PC-9 (cell line): ENCODE measurements at regions of chr1 and their contacts with region 1.

Region 1: DNA sequence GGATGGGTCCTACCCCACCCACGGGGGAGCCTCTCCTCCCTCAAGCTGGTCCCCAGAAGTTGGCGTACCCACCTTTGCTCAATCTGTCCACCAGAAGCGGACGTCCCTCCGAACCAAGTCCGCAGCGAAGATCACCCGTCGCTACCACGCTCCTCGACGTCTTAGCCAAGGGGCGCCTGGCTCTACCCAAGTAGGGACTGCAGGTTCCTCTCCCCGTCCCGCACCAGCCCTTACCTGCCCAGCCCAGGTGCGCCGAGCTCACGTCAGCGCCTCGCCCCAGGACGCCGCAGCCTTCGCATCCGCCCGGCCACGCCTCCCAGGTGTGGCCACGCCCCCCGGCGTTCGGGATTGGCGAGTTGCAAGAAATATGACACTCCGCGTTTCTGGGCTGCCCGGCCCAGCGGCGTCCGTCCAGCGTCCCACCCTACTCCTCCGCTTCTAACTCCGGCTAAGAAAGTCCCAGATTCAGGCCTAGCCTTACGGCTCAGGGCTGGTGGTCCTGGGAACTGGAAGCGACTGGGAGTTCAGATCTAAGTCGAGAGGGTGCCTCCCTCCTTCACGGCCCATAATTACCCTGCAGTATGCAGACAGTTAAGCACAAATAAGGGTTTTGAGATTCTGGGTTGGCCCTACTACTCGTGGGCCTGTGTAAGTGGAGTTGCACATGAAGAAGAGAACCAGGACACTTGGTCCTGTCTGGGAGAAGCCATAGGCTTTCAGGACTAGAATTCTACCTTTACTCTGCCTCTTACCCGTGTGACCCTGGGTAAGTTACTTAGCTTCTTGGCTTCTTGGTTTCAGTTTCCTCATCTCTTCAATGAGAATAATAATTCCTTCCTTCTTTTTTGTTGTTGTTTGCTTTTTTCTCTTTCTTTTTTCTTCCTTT is at the start of gene IRF6:
- DNase-seq: peak; percentile 89 to 96
- H3K4me3 ChIP-seq: peak within 1 kb of the TSS; percentile 78
- H3K27ac ChIP-seq: peak within 1 kb of the TSS; percentile 80
- H3K4me1 ChIP-seq: peaks cover 41% of the 10 kb centered on the region
- H3K27me3 ChIP-seq: no peaks in the 10 kb centered on the region
- CTCF ChIP-seq: no peak
- total RNA-seq, gene IRF6: 46.5 and 50.9 TPM in 2 replicates

Region 2: GRCh38 chr1:208714323-208714722 is 1091.8 kb before region 1 on chr1:
- CTCF ChIA-PET with region 1: no interaction called
- POLR2A ChIA-PET with region 1: no interaction called
- intact Hi-C with region 1: no loop called
- DNase-seq: no peak
- H3K4me3 ChIP-seq: no peak overlapping the region
- H3K27ac ChIP-seq: no peak overlapping the region
- H3K4me1 ChIP-seq: no peaks in the 10 kb centered on the region
- H3K27me3 ChIP-seq: 0 out of 2 replicates have a peak, but pooled peaks cover 4% of the 10 kb centered on the region
- CTCF ChIP-seq: no peak

Region 3: GRCh38 chr1:209784265-209785169 is 21.6 kb before region 1 on chr1 and contains the start of gene C1orf74:
- CTCF ChIA-PET with region 1: interaction called, 14 read pairs
- POLR2A ChIA-PET with region 1: interaction called, 40 read pairs
- intact Hi-C with region 1: loop called (anchors 1 kb)
- DNase-seq: peak; percentile 94 to 98
- H3K4me3 ChIP-seq: peak within 1 kb of the TSS; percentile 92
- H3K27ac ChIP-seq: peak within 1 kb of the TSS; percentile 85
- H3K4me1 ChIP-seq: peaks cover 22% of the 10 kb centered on the region
- H3K27me3 ChIP-seq: no peaks in the 10 kb centered on the region
- CTCF ChIP-seq: no peak
- total RNA-seq, gene C1orf74: 4.1 and 5.0 TPM in 2 replicates

Region 4: GRCh38 chr1:209839875-209840491 is 33.9 kb after region 1 on chr1:
- CTCF ChIA-PET with region 1: no interaction called
- POLR2A ChIA-PET with region 1: interaction called, 8 read pairs
- intact Hi-C with region 1: loop called (anchors 5 kb)
- DNase-seq: peak; percentile 60 to 92
- H3K4me3 ChIP-seq: peak overlapping the region; percentile 34; the same call in 1 of the 2 replicates
- H3K27ac ChIP-seq: peak overlapping the region; percentile 91
- H3K4me1 ChIP-seq: peaks cover 26% of the 10 kb centered on the region
- H3K27me3 ChIP-seq: no peaks in the 10 kb centered on the region
- CTCF ChIP-seq: no peak